BJ (cell line): ENCODE measurements at regions of chr20 and their contacts with region 1.

Region 1: DNA sequence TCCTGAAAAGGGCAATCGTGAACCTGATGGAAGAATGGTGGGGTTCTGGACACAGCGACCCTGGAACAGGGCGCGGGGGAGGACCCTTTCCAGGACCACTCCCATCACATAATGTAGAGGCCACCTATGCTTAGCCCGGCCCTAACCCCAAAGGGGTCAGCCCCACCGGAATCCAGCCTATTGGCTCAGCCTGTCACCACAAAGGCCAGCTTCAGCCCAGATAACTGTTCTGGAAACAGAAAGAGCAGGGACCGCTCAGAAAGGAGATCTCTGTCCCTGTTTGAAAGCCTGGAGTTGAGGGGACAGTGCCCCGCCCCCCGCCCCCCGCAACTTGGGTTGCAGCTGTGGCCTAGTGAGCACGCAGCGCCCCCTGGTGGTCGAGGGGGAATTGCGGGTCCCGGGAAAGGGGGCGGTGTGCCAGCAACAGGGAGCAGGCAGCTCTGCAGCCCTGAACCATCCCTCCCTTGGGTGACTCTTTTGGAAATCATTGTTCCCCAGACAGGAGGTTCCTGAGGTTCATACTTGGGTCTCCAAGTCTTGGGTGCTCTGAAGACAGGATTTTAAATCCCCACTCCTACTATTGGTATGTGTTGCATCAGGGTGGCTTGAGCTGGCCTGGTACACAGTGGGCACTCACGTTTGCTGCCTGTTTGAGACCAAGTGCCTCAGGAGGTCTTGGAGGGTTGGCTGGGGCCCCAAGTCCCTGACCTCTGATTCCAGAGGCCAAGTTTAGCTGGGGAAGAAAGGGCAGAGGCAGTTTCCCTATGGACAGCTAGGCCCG is 1.5 kb downstream of the SIGLEC1 start:
- DNase-seq: no peak
- H3K4me3 ChIP-seq: no peak overlapping the region
- H3K27me3 ChIP-seq: no peaks in the 10 kb centered on the region; the same call in 1 of the 2 replicates
- CTCF ChIP-seq: peak; percentile 95

Region 2: DNA sequence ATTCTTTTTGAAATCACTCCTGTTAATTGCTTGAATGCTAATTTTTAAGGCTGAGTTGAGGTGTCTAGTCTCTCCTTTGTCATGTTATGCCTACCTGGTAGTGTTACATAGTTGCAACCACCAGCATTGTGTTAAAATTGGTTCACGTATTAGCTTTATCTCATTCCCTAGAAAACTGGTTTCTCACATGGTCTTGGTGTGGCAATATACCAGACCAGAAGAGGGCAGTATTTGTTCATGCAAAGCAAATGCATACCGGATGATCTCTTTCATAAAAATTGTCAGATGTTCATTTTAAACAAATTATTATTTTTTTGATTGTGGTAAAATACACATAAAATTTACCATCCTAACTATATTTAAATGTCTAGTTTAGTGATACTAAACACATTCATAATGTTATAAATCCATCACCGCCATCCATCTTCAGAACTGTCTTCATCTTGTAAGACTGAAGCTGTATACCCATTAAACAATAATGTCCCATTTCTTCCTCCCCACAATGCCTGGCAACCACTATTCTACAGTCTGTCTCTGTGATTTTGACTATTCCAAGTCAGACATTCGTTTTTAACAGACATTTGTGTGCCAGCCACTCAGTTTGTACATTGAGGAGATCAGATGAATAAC is 147.2 kb before region 1 on chr20:
- CTCF ChIA-PET with region 1: interaction called, 16 read pairs
- POLR2A ChIA-PET with region 1: no interaction called
- DNase-seq: no peak
- H3K4me3 ChIP-seq: no peak overlapping the region
- H3K27me3 ChIP-seq: no peaks in the 10 kb centered on the region
- CTCF ChIP-seq: peak; percentile 80

Region 3: GRCh38 chr20:3672547-3673171 is 38.2 kb before region 1 on chr20:
- CTCF ChIA-PET with region 1: interaction called, 331 read pairs
- POLR2A ChIA-PET with region 1: interaction called, 4 read pairs
- DNase-seq: no peak
- H3K4me3 ChIP-seq: no peak overlapping the region
- H3K27me3 ChIP-seq: no peaks in the 10 kb centered on the region
- CTCF ChIP-seq: no peak

Region 4: GRCh38 chr20:3686867-3687321 is 24.0 kb before region 1 on chr20:
- CTCF ChIA-PET with region 1: interaction called, 331 read pairs
- POLR2A ChIA-PET with region 1: no interaction called
- DNase-seq: peak; percentile 89
- H3K4me3 ChIP-seq: no peak overlapping the region; the same call in 1 of the 2 replicates
- H3K27me3 ChIP-seq: no peaks in the 10 kb centered on the region
- CTCF ChIP-seq: no peak

Region 5: DNA sequence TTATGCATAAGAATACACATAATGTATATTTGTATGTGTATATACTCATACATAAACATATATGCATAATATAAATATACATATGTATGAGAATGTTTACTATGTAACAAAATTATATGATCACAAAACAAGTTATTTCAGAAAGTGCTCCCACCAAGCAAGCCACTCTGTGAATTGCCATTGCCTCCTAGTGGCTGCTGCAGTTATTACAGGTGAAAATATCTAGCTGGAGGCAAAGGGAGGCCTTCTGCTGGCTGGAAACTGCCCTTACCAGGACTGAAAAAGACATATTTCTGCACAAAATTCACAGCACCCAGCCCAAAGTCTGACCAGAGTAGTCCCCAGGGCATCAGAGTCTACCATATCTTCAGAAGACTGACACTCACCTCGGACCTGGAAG is 14.7 kb before region 1 on chr20:
- CTCF ChIA-PET with region 1: interaction called, 45 read pairs
- POLR2A ChIA-PET with region 1: no interaction called
- DNase-seq: no peak
- H3K4me3 ChIP-seq: no peak overlapping the region
- H3K27me3 ChIP-seq: peaks cover 2% of the 10 kb centered on the region; the same call in 1 of the 2 replicates
- CTCF ChIP-seq: peak; percentile 57

Region 6: GRCh38 chr20:3721912-3722311 is 11.0 kb after region 1 on chr20:
- CTCF ChIA-PET with region 1: interaction called, 21 read pairs
- POLR2A ChIA-PET with region 1: no interaction called
- DNase-seq: no peak
- H3K4me3 ChIP-seq: no peak overlapping the region
- H3K27me3 ChIP-seq: no peaks in the 10 kb centered on the region; the same call in 1 of the 2 replicates
- CTCF ChIP-seq: no peak

Region 7: GRCh38 chr20:3727401-3728021 is 16.6 kb after region 1 on chr20:
- CTCF ChIA-PET with region 1: interaction called, 21 read pairs
- POLR2A ChIA-PET with region 1: no interaction called
- DNase-seq: peak; percentile 19
- H3K4me3 ChIP-seq: 0 out of 2 replicates have a peak overlapping the region, but pooled peaks have one; percentile 1
- H3K27me3 ChIP-seq: peaks cover 18% of the 10 kb centered on the region
- CTCF ChIP-seq: peak; percentile 8; the same call in 1 of the 2 replicates